PC-9 (cell line): ENCODE measurements at regions of chr2 and their contacts with region 1.

Region 1: DNA sequence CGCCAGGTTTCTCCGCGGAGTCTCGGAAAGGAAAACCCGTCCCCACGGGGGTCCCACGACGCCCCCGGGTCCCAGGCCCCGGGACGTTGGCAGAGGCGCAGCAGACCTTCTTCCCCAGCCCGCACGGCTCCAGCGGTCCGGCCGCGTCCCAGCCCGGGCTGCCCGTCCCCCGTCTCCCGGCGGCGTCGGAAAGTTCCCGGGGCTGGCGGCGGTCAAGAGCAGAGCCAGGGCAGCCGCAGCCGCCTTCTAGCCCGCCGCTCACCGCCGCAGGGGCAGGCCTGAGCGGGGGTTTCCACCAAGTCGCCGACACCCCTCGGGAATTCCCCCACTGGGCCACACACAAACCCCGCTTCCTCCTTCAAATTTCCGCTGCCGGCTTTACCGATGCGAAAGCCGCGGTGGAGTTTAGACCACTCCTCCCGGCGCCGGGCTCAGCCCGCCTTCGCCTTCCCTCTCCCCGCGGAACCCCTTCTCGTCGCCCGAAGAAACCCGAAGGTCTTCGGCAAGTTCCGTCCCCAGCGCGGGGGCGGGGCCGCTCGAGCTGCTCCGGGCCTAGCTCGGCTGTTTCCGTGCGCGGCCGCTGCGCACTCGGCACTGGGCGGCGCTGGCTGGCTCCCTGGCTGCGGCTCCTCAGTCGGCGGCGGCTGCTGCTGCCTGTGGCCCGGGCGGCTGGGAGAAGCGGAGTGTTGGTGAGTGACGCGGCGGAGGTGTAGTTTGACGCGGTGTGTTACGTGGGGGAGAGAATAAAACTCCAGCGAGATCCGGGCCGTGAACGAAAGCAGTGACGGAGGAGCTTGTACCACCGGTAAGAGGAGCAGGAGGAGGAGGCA is at the start of gene CREB1:
- DNase-seq: peak; percentile 86 to 97
- H3K4me3 ChIP-seq: peak within 1 kb of the TSS; percentile 84
- H3K27ac ChIP-seq: peak within 1 kb of the TSS; percentile 90
- H3K4me1 ChIP-seq: peaks cover 34% of the 10 kb centered on the region
- H3K27me3 ChIP-seq: no peaks in the 10 kb centered on the region
- CTCF ChIP-seq: no peak; the same call in 1 of the 2 replicates
- total RNA-seq, gene CREB1: 36.1 and 42.2 TPM in 2 replicates

Region 2: DNA sequence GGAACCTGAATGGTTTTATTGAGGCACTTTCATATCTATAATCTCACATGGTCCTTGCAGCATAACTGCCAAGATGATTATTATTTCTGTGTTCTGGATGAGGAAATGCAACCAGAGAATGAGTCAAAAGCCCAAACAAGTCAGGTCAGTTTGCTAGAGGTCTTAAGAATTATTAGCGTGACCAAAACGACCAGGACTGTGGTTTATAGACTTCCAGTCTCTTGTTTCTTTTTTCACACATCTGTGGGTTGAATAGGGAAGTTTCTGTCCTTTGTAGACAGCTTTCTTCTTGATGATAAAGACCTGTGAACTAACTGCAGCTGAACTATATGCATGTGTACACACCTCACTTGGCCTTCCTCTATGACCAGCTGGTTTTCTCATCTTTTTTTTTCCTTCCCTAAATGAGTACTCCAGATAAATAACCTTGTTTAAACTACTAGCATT is 1072.3 kb before region 1 on chr2:
- CTCF ChIA-PET with region 1: no interaction called
- POLR2A ChIA-PET with region 1: interaction called, 12 read pairs
- intact Hi-C with region 1: no loop called
- DNase-seq: peak in 1 of 2 experiments; percentile 88
- H3K4me3 ChIP-seq: no peak overlapping the region
- H3K27ac ChIP-seq: peak overlapping the region; percentile 56
- H3K4me1 ChIP-seq: peaks cover 19% of the 10 kb centered on the region
- H3K27me3 ChIP-seq: no peaks in the 10 kb centered on the region
- CTCF ChIP-seq: no peak

Region 3: DNA sequence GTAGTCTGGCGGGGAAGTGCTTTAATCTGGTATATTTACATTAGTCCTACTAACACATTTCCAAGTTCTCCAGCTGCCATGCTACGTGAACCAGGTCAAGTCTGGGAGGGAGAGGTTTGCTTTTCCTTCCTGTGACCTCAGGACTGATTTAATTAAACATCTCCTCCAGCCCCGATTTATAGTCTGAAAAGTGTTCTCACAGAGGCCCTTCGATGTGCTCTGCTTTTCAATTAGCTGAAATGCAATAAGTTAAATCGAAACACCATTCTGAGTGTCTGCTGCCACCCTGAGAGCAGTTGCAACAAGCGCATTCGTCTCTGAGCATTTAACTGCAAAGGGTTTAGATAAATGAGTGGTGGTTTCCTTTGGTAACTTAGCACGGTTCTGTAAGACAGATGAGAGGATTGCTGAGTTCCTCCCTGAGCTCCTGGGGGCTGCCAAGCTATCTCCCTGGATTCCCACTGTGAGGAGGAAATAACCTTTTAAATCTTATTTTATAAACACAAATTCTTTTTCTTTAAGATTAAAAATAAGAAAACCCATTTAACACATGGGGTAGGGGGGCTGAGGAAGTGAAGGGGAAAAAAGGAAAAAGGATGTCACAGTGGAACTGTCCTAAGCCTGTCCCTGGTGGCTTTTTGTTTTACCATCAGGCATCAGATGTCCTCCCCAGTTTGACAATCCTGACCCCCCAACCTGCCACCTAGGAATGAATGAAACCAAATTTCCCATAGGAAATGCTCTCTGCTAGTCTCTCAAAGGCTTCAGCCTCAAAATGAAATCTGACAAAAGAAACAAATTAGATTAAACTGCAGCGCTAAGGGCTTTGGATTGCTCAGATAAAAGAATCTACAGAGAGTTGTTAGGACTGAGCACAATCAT is 56.3 kb before region 1 on chr2:
- CTCF ChIA-PET with region 1: no interaction called
- POLR2A ChIA-PET with region 1: no interaction called
- intact Hi-C with region 1: loop called (anchors 1 kb)
- DNase-seq: peak; percentile 40 to 46
- H3K4me3 ChIP-seq: no peak overlapping the region
- H3K27ac ChIP-seq: no peak overlapping the region
- H3K4me1 ChIP-seq: peaks cover 18% of the 10 kb centered on the region
- H3K27me3 ChIP-seq: no peaks in the 10 kb centered on the region
- CTCF ChIP-seq: peak; percentile 64

Region 4: DNA sequence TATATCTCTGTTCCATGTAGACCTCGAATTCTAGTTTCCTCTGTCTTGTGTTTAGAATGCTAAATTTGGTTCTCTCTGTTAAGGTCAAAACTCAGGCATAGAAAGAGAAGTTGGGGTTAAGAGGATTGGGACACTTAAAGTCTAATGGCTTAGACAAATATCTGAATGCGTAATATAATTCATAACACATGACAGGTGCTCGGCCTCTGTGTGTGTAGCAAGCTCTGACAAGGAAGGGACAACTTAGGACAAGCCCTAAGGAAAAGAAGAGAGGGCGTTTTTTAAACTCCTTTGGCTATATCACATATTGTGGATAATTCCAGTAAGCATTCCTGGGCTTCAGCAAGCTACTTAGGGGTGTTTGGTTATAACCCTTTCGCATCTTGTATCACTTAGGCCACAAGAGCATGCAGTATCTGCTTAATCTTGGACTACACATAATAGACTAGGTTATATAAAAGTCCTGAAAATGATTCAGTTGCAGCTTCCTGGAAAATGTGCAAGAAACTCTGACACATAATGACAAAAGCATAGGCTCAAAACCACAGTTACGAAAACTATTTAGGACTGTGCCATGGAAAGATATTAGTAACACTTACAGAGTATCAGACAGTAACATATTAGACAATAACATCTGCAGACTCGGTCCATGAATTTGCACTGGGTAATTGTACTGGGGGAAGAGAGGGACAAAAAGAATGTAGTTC is 15.8 kb before region 1 on chr2:
- CTCF ChIA-PET with region 1: no interaction called
- POLR2A ChIA-PET with region 1: interaction called, 4 read pairs
- intact Hi-C with region 1: loop called (anchors 2 kb)
- DNase-seq: peak; percentile 15 to 84
- H3K4me3 ChIP-seq: no peak overlapping the region
- H3K27ac ChIP-seq: peak overlapping the region; percentile 77
- H3K4me1 ChIP-seq: peaks cover 34% of the 10 kb centered on the region
- H3K27me3 ChIP-seq: no peaks in the 10 kb centered on the region
- CTCF ChIP-seq: no peak